Panc1 (cell line): ENCODE measurements at regions of chr11 and their contacts with region 1.

Region 1: DNA sequence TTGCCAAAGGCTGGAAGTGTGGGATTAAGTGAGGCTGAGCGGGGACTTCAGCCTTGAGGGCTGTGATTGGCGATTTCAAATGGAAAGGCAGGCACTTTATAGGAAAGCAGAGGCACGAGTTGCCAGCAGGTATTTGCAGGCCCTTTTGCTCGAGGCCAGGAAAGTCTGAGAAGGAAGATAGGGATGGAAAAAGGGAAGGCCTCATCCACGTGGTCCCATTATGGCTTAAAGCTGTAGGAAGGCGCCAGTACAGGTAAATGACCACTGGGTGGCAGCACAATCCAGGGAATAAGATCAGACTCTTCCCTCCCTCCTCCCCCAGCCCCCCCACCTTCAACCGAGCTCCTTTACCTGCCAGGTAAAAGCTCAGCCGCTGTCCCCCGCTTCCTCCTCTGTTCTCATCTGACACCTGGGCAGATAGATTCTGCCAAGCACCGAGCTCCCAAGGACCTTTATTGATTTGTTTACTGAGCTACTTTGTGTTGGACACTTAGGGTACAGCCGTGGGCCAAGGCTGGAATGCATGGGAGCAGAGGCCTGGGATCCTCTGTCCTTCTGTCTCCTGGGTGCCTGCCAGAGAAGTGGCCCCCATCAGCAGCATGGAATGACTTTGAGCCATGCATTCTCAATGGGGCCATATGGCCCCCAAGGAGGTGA is 7.5 kb downstream of the P2RX3 start:
- DNase-seq: no peak
- ATAC-seq: peak; percentile 89
- H3K4me3 ChIP-seq: no peak overlapping the region
- H3K27ac ChIP-seq: no peak overlapping the region
- H3K4me1 ChIP-seq: no peaks in the 10 kb centered on the region
- H3K27me3 ChIP-seq: no peaks in the 10 kb centered on the region
- CTCF ChIP-seq: peak; percentile 85

Region 2: DNA sequence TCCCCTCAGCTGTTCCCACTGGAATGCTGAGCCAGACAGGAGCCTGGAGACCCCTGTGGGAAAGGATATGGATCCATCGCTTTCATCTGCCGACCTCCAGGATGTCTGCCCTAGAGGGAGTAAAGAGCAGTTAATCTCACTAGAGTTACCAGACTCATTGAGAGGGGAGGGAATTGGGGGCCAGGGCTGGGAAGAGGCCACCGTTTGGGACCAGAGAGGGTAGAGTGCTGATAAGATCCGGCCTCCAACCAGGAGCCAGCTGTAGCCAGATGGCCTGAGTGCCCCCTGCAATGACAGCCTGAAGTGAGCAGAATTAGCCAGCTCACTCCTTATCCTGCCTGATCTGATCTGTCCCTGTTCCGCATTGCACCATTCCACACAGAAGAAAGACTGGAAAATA is 104.9 kb before region 1 on chr11:
- CTCF ChIA-PET with region 1: no interaction called
- POLR2A ChIA-PET with region 1: no interaction called
- in situ Hi-C with region 1: no loop called
- intact Hi-C with region 1: no loop called
- DNase-seq: no peak
- ATAC-seq: no peak
- H3K4me3 ChIP-seq: no peak overlapping the region
- H3K27ac ChIP-seq: no peak overlapping the region
- H3K4me1 ChIP-seq: no peaks in the 10 kb centered on the region
- H3K27me3 ChIP-seq: no peaks in the 10 kb centered on the region
- CTCF ChIP-seq: no peak

Region 3: DNA sequence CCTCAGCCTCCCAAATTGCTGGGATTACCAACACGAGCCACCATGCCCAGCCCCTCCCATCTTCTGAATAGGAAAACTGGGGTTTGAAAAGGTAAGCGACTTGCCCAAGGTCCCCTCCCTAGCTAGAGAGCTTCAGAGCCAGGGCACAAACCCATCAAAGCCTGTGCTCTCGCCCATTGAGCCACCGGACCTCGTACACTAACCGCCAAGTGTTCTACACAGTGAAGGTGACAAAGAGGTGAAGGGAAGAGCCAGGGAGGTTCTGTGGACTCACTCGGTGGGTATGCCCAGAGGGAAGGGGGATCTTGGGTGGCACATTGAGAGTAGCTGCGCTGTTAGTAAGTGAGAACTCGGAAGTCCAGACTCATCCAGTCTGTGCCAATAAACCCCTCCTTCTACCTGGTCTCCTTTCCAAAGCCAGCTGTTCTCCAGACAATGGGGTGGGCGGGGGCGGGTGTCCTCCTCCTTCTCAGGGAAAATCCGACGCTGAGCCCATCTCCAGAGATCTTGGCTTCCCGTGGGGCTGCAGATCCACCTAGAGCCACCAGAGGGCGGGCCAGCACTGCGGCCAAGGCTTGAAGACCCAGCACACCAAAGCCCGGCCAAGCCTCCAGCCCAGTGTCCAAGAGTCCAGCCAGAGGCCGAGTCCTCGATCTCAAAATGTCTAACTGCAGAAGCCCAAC is 111.4 kb after region 1 on chr11:
- CTCF ChIA-PET with region 1: interaction called, 5 read pairs
- POLR2A ChIA-PET with region 1: no interaction called
- in situ Hi-C with region 1: no loop called
- intact Hi-C with region 1: loop called (anchors 5 kb)
- DNase-seq: peak; percentile 64
- ATAC-seq: peak; percentile 85
- H3K4me3 ChIP-seq: peak overlapping the region in 1 of 2 experiments; percentile 32; a peak in 1 of 4 replicates
- H3K27ac ChIP-seq: no peak overlapping the region
- H3K4me1 ChIP-seq: peaks cover 4% of the 10 kb centered on the region; the same call in 1 of the 2 replicates
- H3K27me3 ChIP-seq: peaks cover 6% of the 10 kb centered on the region; the same call in 1 of the 2 replicates
- CTCF ChIP-seq: peak; percentile 98

Region 4: DNA sequence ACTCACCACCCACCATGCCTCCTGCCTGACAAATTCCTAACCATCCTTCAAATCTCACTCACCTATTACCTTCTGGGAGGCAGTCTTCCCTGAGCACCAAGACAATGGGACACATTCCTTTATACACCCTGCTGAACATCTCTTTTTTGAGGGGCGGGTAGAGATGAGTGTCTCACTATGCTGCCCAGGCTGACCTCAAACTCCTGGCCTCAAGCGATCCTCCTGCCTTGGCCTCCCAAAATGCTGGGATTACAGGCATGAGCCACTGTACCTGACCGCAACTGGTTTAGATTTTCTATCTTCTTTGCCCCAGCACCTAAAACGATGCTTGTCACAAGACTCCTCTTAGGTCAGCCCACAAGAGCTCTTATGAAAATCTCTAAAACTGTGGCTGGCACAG is 177.7 kb after region 1 on chr11:
- CTCF ChIA-PET with region 1: no interaction called
- POLR2A ChIA-PET with region 1: no interaction called
- in situ Hi-C with region 1: no loop called
- intact Hi-C with region 1: loop called (anchors 2 kb)
- DNase-seq: no peak
- ATAC-seq: no peak
- H3K4me3 ChIP-seq: no peak overlapping the region
- H3K27ac ChIP-seq: no peak overlapping the region
- H3K4me1 ChIP-seq: no peaks in the 10 kb centered on the region; the same call in 1 of the 2 replicates
- H3K27me3 ChIP-seq: no peaks in the 10 kb centered on the region
- CTCF ChIP-seq: no peak

Region 5: DNA sequence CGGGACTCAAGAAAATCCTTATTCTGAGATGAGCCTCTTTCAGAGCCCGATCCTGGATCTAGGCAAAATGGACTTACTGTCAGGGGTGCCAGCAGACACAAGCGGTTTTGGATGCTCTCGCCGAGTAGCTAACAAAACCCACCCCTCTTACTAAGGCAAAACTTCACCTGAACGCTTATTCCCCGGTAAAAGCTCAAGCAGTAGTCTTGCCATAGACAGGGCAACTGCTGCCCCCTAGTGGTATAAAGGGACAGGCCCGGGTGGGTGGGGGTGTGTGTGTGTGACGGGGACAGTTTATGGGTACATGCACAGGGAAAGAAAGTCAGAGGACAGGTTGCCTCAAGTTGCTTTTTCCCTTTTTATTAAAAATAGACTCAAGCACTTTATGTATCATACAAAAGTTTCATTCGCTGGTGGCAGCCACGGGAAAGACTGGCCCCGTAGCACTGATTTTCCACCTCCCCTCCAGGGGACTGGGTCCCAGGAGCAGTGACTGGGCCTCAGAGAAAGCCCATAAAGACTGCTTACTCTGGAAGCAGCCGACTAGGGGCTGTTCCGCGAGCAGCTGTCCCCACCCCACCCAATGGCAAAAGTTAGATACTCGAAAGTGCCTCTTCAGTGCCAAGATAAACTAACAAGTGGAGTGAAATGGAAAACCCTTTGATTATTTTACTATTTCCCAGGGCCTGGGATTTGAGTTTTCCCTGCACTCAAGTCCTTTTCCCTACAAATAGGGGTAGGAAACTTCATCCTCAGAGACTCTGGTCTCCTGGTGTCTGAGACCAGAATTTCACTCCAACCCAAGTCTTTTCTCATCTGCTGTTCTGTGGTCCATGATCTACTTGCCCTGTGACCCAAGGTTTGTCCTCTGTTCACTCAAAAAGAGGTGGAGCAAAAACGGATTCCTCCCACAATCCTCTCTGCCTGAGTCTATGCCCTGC is 299.3 kb after region 1 on chr11:
- CTCF ChIA-PET with region 1: interaction called, 10 read pairs
- POLR2A ChIA-PET with region 1: no interaction called
- in situ Hi-C with region 1: no loop called
- intact Hi-C with region 1: loop called (anchors 5 kb)
- DNase-seq: no peak
- ATAC-seq: peak; percentile 77
- H3K4me3 ChIP-seq: no peak overlapping the region
- H3K27ac ChIP-seq: no peak overlapping the region
- H3K4me1 ChIP-seq: peaks cover 25% of the 10 kb centered on the region
- H3K27me3 ChIP-seq: peaks cover 10% of the 10 kb centered on the region; the same call in 1 of the 2 replicates
- CTCF ChIP-seq: peak; percentile 94